A673 (cell line): ENCODE measurements at regions of chr9 and their contacts with region 1.

Region 1: GRCh38 chr9:35790385-35791296 is 750 bp upstream of the NPR2 start:
- DNase-seq: peak; percentile 89
- H3K4me3 ChIP-seq: no peak overlapping the region
- H3K27ac ChIP-seq: no peak overlapping the region
- H3K4me1 ChIP-seq: no peaks in the 10 kb centered on the region
- H3K27me3 ChIP-seq: no peaks in the 10 kb centered on the region
- CTCF ChIP-seq: peak; percentile 91

Region 2: GRCh38 chr9:35756275-35757225 is 34.1 kb before region 1 on chr9:
- CTCF ChIA-PET with region 1: no interaction called
- POLR2A ChIA-PET with region 1: no interaction called
- intact Hi-C with region 1: loop called (anchors 5 kb)
- DNase-seq: peak; percentile 80
- H3K4me3 ChIP-seq: peak overlapping the region; percentile 87
- H3K27ac ChIP-seq: peak overlapping the region; percentile 91
- H3K4me1 ChIP-seq: peaks cover 13% of the 10 kb centered on the region
- H3K27me3 ChIP-seq: no peaks in the 10 kb centered on the region
- CTCF ChIP-seq: peak; percentile 82

Region 3: DNA sequence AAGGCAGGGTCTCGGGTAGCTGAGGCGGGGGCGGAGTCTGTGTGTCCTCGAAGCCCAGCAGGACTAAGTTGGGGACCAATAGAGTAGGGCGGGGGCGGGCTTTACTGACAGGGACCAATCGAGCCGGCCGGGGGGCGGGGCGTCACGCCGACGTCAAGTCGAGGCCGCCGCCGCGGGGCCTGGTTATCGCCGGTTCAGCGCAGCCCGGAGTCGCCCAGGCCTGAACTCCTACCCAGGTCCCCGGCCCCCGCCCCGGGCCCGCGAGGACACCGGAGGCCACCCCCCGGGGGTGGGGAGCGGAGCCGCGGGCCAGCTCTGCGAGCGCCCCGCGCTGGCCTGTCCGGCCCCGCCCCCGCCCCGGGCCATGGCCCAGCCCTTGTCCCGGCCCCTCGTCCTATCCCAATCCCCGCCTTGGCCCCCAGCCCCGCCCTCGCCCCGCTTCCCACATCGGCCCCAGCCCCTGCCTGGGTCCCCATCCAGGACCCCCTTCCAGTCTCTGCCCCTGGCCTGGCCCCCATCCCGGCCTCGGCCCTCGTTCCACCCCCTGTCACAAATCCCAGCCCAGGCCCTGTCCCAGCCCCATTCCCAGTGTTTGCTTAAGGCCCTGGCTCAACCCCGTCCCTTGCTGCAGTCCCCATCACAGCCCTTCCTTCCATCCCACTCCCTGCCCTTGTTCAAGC is 38.6 kb after region 1 on chr9 and contains the start of gene TMEM8B:
- CTCF ChIA-PET with region 1: interaction called, 17 read pairs
- POLR2A ChIA-PET with region 1: no interaction called
- intact Hi-C with region 1: loop called (anchors 1 kb)
- DNase-seq: peak; percentile 96
- H3K4me3 ChIP-seq: peak within 1 kb of the TSS; percentile 61
- H3K27ac ChIP-seq: peak within 1 kb of the TSS; percentile 63
- H3K4me1 ChIP-seq: peaks cover 9% of the 10 kb centered on the region
- H3K27me3 ChIP-seq: no peaks in the 10 kb centered on the region
- CTCF ChIP-seq: no peak
- total RNA-seq, gene TMEM8B: 6.9 and 10.9 TPM in 2 replicates

Region 4: DNA sequence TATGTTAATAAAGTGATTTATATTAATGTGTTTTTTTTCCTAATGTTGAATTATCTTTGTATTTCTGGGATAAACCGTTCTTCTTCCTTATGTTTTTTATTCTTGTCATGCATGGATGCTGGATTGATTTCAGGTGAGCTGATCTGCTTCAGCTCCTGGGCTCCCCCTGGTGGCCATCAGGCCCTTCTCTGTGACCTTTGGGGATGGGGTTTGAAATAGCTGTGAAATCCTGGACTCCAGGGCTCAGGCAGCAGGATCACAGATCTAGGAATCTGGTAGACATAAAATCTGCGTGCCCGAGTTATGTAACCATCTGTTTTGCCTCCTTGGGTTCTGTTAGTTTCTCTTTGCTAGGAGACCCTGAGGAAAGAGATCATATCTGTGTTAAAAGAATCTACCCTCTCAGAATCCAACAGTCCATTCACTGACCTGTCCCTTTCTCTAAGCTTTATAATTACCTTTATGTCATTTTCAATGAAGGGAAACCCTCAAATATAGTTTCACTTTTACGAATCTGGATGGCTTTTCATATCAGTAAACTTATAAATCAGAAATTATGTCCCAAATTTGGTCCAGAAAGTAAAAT is 91.7 kb after region 1 on chr9:
- CTCF ChIA-PET with region 1: interaction called, 40 read pairs
- POLR2A ChIA-PET with region 1: no interaction called
- intact Hi-C with region 1: loop called (anchors 1 kb)
- DNase-seq: peak; percentile 71
- H3K4me3 ChIP-seq: no peak overlapping the region
- H3K27ac ChIP-seq: no peak overlapping the region
- H3K4me1 ChIP-seq: no peaks in the 10 kb centered on the region
- H3K27me3 ChIP-seq: no peaks in the 10 kb centered on the region
- CTCF ChIP-seq: peak; percentile 99

Region 5: DNA sequence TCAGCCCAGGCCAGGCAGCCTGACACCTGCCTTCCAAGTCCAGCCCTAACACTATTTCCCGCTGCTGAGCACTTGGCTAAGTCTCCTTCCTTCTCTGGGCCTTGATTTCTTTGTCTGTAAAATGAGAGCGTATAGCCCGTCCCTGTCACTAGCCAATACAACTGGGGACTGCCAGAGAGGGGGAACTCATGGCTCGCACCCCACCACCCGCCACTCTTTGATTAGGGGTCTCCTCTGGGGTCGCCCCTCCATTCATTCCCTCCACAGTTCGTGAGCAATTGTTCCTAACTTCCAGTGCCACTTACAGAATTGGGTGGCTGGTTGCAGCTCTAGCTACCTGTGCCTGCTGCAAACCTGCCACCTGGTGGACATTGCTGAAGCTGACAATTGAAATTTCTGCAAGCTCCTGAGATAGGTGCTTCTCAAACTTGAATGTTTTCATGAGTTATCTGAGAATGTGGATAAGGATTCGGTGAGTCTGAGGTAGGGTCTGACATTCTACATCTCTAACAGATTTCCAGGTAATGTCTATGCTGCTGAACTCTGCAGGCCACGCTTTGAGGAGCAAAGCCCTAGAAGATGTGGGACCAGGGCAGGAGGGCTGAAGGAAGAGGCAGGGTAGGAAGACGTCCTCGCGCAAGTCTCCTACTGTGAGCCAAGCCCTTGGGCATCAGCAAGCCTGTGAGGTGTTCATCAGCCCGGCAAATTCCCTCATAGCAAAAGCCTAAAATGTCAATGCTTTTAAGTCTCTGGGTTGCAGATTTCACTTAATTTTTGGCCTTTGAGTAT is 232.8 kb after region 1 on chr9:
- CTCF ChIA-PET with region 1: interaction called, 6 read pairs
- POLR2A ChIA-PET with region 1: no interaction called
- intact Hi-C with region 1: loop called (anchors 10 kb)
- DNase-seq: peak; percentile 71
- H3K4me3 ChIP-seq: no peak overlapping the region
- H3K27ac ChIP-seq: no peak overlapping the region
- H3K4me1 ChIP-seq: no peaks in the 10 kb centered on the region
- H3K27me3 ChIP-seq: no peaks in the 10 kb centered on the region
- CTCF ChIP-seq: peak; percentile 87